ENCODE measurements at regions of chr10 and their contacts with region 1.

Region 1: DNA sequence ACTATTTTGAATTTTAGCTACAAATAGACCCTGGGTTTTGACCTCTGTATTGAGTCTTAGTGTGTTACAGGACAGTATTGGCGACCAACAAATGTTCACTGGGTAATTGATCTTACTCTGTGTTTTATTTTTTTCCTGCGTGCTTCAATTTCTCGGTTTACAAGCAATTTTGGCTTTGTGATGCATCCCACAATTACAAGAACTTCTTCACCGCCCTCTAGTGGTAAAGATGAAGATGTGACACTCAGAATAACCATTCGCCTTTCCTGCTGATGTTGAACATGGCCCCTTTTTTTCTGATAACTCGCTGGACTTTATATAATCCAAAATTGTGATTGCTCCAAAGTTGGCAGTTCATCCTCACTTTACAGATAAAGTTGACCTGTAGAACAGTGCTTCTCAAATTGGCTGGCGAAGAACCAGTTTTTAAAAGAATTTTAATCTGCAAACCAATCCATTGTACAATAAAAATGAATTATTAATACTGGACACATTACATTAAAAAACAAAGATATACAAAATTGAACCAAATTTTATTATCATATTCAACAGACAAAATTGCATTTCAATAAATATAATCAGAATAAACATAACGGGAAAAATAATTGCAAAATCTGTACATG is 20.2 kb upstream of the SMC3 start:
- DNase-seq: no peak
- ATAC-seq: peak; percentile 58

Region 2: GRCh38 chr10:110311357-110311949 is 235.8 kb before region 1 on chr10:
- intact Hi-C with region 1: loop called (anchors 5 kb)
- DNase-seq: peak; percentile 39
- ATAC-seq: peak; percentile 80

Region 3: DNA sequence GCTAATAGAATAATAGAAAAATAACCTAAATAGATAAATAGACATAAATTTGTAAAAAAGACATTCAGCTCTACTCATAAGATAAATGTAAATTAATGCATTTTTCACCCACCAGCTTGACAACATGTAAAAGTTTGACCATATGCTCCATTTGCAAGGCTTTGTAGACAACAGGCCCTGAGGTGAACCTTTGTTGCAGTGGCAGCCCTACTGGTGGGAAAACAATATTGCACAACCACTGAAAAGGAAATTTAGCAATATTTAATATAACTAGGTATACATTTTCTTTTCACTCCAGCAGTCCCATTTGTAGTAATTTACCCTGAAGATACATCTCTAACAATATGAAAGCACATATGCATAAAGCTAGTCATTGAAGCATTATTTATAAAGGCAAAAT is 490.6 kb after region 1 on chr10:
- intact Hi-C with region 1: no loop called
- DNase-seq: no peak
- ATAC-seq: no peak

Measured in left ventricle myocardium superior (tissue), 1 donor.